ENCODE measurements at regions of chr17 and their contacts with region 1.

Region 1: GRCh38 chr17:69523244-69523861 is 108.9 kb downstream of the MAP2K6 start:
- DNase-seq: no peak
- H3K4me3 ChIP-seq: no peak overlapping the region
- CTCF ChIP-seq: peak; percentile 66

Region 2: GRCh38 chr17:68777243-68777855 is 746.0 kb before region 1 on chr17:
- CTCF ChIA-PET with region 1: interaction called, 17 read pairs
- POLR2A ChIA-PET with region 1: no interaction called
- DNase-seq: no peak
- H3K4me3 ChIP-seq: no peak overlapping the region
- CTCF ChIP-seq: peak; percentile 72

Region 3: DNA sequence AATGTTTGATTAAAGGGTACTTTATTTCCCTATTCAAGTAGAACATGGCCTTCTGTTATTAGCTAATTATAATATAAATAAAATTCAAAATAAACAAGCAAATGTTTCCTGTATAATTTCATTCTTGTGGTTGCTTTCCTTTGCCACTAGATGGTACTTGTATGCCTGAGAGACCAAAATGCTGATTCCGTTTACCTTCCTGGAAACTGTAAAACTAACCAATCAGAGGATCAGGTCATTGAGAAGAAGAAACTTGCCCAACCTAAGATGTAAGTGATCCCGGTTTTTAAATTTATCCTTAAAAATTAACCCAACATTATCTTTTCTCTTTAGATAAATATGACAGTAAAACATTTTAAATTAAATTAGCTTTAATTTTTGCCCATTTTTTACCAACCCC is 188.3 kb before region 1 on chr17:
- CTCF ChIA-PET with region 1: interaction called, 25 read pairs
- POLR2A ChIA-PET with region 1: no interaction called
- DNase-seq: no peak
- H3K4me3 ChIP-seq: no peak overlapping the region
- CTCF ChIP-seq: no peak

Region 4: DNA sequence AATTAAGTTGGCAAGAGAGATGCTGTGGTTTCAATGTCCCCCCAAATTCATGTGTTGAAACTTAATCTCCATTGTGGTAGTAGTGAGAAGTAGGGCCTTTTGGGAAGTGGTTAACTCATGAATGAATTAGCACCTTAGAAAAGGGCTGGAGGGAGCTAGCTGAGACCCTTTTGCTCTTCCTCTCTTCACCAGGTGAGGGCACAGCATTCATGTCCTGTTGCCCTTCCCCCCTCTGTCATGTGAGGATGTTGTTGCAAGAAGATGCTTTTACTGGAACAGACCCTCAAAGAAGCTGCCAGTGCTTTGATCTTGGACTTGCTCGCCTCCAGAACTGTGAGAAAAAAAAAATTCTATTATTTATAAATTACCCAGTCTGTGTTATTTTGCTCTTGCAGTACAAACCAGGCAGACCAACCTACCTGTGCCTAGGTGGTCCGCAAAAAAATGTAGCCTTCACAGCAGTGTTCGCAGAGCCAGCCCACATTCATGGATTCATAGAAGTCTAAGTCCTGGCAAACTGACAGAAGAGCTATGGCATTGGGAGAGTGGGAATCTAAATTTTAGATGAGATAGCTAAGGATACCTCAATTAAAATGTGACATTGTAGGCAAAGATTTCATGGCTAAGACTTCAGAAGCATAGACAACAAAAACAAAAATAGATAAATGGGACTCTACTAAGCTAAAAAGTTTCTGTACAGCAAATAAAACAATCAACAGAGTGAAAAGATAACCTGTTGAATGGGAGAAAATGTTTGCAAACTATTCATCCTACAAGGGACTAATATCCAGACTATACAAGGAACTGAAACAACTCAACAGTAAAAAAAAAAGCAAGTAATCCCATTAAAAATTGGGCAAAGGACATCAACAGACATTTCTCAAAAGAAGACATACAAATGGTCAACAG is 164.4 kb before region 1 on chr17:
- CTCF ChIA-PET with region 1: no interaction called
- POLR2A ChIA-PET with region 1: no interaction called
- DNase-seq: no peak
- H3K4me3 ChIP-seq: no peak overlapping the region
- CTCF ChIP-seq: no peak

Region 5: DNA sequence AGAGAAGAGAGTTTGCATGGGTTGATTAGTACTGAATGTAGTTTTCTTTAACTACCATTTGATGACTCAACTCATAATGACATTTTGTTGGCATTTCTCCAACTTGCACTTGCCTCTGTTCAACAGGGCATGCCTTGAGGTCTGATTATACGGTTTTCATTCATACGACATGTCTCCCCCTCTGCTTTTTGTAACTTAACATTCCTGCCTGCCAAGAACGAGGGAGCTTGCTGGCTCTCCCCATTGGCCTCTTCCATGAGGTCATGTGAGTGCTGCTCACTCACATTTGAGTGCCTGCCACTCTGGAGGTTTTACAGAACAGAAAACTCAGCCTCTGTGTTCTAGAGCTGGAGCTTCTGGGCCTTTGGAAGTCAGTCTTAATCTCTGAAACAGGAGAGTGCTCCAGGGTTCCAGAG is 89.2 kb before region 1 on chr17:
- CTCF ChIA-PET with region 1: no interaction called
- POLR2A ChIA-PET with region 1: no interaction called
- DNase-seq: no peak
- H3K4me3 ChIP-seq: no peak overlapping the region
- CTCF ChIP-seq: no peak

Region 6: DNA sequence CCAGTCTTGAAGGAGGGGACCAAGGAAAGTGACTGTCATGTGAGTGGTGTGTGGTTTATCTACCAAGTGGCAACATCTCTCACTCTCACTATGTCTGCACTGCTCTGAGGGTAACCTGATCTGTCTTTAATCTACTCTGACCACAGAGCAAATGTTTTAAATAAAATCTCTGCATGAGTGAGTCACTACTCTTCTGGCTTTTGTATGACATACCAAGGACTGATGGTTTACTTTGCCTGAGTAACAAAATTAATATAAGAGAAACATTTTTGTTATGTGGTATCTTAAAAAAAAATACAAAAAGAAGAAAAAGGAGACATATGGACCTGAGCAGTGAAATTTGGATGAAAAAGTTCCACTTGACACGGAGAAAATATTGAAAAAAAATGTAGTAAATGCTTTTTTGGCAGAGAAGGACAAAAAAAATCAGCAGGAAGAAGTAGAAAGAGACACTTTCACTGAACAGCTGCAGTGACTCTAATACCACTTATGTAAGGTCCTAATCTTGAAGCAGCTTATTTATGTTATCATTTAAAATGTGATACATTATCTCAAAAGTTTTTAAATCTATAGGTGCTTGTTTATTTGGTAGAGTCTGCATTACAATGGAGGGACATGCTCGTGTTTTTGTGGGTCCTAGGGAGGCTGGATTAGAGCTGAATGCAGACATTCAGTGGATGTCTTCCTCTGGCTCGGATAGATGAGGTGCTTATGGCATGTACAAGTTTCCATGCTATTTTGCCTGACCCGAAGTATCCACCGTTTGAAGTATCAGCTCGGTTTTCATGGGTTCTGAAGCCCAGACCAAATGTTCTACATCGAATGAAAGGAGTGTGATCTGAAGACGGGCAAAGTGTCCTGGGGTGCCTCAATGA is 131.9 kb after region 1 on chr17:
- CTCF ChIA-PET with region 1: no interaction called
- POLR2A ChIA-PET with region 1: no interaction called
- DNase-seq: peak; percentile 59
- H3K4me3 ChIP-seq: no peak overlapping the region
- CTCF ChIP-seq: no peak

Region 7: DNA sequence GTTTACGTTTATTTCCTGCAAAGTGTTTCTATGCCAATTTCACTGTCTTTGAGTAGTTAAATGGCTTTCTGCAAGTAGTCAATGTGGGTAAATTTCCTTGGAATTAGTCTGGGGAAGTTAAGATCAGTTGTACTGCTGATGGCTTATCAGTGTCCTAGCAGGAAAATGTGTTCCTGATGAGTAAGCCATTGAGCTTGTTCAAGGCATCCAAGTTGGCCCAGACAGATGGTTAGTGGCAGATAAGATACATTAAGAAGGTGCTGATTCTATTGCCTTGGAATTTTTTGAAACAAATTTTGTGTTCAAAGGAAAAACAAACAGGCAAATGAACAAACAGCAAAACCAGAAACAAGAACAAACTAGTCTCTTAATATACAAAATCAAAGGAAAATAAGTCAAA is 149.6 kb after region 1 on chr17:
- CTCF ChIA-PET with region 1: no interaction called
- POLR2A ChIA-PET with region 1: no interaction called
- DNase-seq: peak; percentile 52
- H3K4me3 ChIP-seq: no peak overlapping the region
- CTCF ChIP-seq: no peak

Region 8: GRCh38 chr17:70552230-70552981 is 1029.1 kb after region 1 on chr17:
- CTCF ChIA-PET with region 1: interaction called, 120 read pairs
- POLR2A ChIA-PET with region 1: no interaction called
- DNase-seq: no peak
- H3K4me3 ChIP-seq: no peak overlapping the region
- CTCF ChIP-seq: no peak

Region 9: DNA sequence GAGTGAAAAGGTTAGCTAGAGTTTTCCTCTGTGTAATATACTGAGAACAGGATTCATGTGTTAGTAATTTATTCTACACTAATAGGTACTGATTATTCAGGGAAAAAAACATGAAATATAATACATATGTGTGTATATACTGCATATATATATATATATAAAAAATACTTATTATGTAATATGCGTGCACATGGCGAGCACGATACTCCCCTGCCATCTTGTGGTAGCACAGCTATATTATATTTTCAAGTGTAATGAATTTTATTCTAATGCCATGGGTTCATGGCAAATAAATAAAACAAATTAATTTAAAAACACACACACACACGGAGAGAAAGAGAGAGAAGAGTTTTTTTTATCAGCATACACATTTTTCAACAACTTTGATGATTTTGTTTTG is 1106.5 kb after region 1 on chr17:
- CTCF ChIA-PET with region 1: interaction called, 11 read pairs
- POLR2A ChIA-PET with region 1: no interaction called
- DNase-seq: no peak
- H3K4me3 ChIP-seq: no peak overlapping the region
- CTCF ChIP-seq: no peak